ENCODE measurements at regions of chr2 and their contacts with region 1.

Region 1: GRCh38 chr2:44044281-44044720 is 48.5 kb upstream of the LRPPRC start:
- DNase-seq: peak; percentile 50 to 84 (median 73)
- ATAC-seq: peak; percentile 99
- H3K4me3 ChIP-seq: no peak overlapping the region
- H3K4me3 Mint-ChIP-seq: no peak overlapping the region
- H3K27ac ChIP-seq: no peak overlapping the region
- H3K27ac Mint-ChIP-seq: no peak overlapping the region
- H3K4me1 ChIP-seq: no peaks in the 10 kb centered on the region
- H3K4me1 Mint-ChIP-seq: peaks cover 2% of the 10 kb centered on the region
- H3K27me3 ChIP-seq: no peaks in the 10 kb centered on the region
- H3K27me3 Mint-ChIP-seq: peaks cover 5% of the 10 kb centered on the region
- CTCF ChIP-seq: peak; percentile 76

Region 2: GRCh38 chr2:43773876-43774613 is 270.3 kb before region 1 on chr2 and contains the start of gene DYNC2LI1:
- CTCF ChIA-PET with region 1: no interaction called
- POLR2A ChIA-PET with region 1: no interaction called
- intact Hi-C with region 1: no loop called
- DNase-seq: peak; percentile 38 to 86 (median 70)
- ATAC-seq: peak; percentile 92
- H3K4me3 ChIP-seq: peak within 1 kb of the TSS; percentile 89 to 97
- H3K4me3 Mint-ChIP-seq: peak within 1 kb of the TSS; percentile 96
- H3K27ac ChIP-seq: peak within 1 kb of the TSS; percentile 48 to 54
- H3K27ac Mint-ChIP-seq: peak within 1 kb of the TSS; percentile 80
- H3K4me1 ChIP-seq: no peaks in the 10 kb centered on the region
- H3K4me1 Mint-ChIP-seq: peaks cover 15% of the 10 kb centered on the region
- H3K27me3 ChIP-seq: no peaks in the 10 kb centered on the region
- H3K27me3 Mint-ChIP-seq: peaks cover 8% of the 10 kb centered on the region
- CTCF ChIP-seq: no peak
- total RNA-seq, gene DYNC2LI1: 1.4 to 1.8 TPM

Region 3: GRCh38 chr2:44207102-44207501 is 162.8 kb after region 1 on chr2:
- CTCF ChIA-PET with region 1: no interaction called
- POLR2A ChIA-PET with region 1: no interaction called
- intact Hi-C with region 1: no loop called
- DNase-seq: no peak
- ATAC-seq: no peak
- H3K4me3 ChIP-seq: no peak overlapping the region
- H3K4me3 Mint-ChIP-seq: no peak overlapping the region
- H3K27ac ChIP-seq: no peak overlapping the region
- H3K27ac Mint-ChIP-seq: no peak overlapping the region
- H3K4me1 ChIP-seq: peaks cover 11% of the 10 kb centered on the region
- H3K4me1 Mint-ChIP-seq: peaks cover 40% of the 10 kb centered on the region
- H3K27me3 ChIP-seq: no peaks in the 10 kb centered on the region
- H3K27me3 Mint-ChIP-seq: no peaks in the 10 kb centered on the region
- CTCF ChIP-seq: no peak

Region 4: DNA sequence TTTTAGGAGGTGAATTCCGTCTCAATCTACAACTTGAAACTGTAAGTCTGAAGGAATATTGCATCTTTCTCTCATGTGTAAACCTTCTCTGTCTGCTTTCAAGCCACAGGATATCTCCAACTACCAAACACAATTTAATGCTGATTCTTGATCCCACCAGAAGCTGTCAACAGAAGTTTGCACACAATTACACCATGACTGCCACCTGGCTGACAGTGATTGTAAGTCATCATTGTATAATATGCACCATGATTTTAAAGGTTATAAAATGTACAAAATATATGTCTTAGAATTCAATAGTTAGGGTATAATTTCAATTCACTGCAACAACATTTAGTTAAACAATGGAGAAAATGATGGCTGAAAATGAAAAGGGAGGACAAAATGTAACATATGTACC is 298.6 kb after region 1 on chr2:
- CTCF ChIA-PET with region 1: interaction called, 8 read pairs
- POLR2A ChIA-PET with region 1: no interaction called
- intact Hi-C with region 1: loop called (anchors 1 kb)
- DNase-seq: peak in 4 of 9 experiments; percentile 25 to 62 (median 48)
- ATAC-seq: peak; percentile 62
- H3K4me3 ChIP-seq: no peak overlapping the region
- H3K4me3 Mint-ChIP-seq: no peak overlapping the region
- H3K27ac ChIP-seq: no peak overlapping the region
- H3K27ac Mint-ChIP-seq: no peak overlapping the region
- H3K4me1 ChIP-seq: no peaks in the 10 kb centered on the region
- H3K4me1 Mint-ChIP-seq: peaks cover 2% of the 10 kb centered on the region
- H3K27me3 ChIP-seq: no peaks in the 10 kb centered on the region
- H3K27me3 Mint-ChIP-seq: no peaks in the 10 kb centered on the region
- CTCF ChIP-seq: peak; percentile 61

Region 5: DNA sequence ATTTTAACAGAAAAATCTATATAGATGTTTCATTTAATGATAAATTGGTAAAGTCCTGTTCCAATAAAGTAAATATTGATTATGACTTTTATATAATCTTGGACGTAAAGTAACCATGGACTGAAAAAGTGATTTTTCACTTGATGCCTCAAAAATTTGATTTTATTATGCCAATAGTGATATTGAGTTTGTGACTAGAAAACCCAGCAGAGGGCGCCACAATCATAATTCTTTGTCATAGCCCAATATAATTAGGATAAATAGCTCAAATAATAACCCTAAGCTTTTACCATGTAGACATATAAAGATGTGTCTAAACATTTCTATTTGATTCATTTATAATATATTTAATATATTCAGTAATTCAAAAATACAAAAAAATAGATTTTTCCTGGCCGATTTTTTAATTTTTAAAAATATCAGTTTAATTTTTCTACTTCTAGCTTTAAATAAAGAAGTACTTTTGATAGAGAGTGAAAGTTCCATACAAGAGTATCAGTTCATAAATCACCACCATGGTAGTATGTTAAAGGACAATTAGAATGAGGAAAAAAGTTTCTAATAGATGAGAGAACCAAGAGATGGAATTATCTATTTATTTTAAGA is 348.1 kb after region 1 on chr2:
- CTCF ChIA-PET with region 1: interaction called, 3 read pairs
- POLR2A ChIA-PET with region 1: no interaction called
- intact Hi-C with region 1: loop called in 1 of 2 experiments (anchors 5 kb)
- DNase-seq: peak in 8 of 9 experiments; percentile 11 to 60 (median 52)
- ATAC-seq: no peak
- H3K4me3 ChIP-seq: no peak overlapping the region
- H3K4me3 Mint-ChIP-seq: no peak overlapping the region
- H3K27ac ChIP-seq: no peak overlapping the region
- H3K27ac Mint-ChIP-seq: no peak overlapping the region
- H3K4me1 ChIP-seq: no peaks in the 10 kb centered on the region
- H3K4me1 Mint-ChIP-seq: peaks cover 6% of the 10 kb centered on the region
- H3K27me3 ChIP-seq: no peaks in the 10 kb centered on the region
- H3K27me3 Mint-ChIP-seq: no peaks in the 10 kb centered on the region
- CTCF ChIP-seq: peak; percentile 77